GM12878 (cell line): ENCODE measurements at regions of chr22 and their contacts with region 1.

Region 1: DNA sequence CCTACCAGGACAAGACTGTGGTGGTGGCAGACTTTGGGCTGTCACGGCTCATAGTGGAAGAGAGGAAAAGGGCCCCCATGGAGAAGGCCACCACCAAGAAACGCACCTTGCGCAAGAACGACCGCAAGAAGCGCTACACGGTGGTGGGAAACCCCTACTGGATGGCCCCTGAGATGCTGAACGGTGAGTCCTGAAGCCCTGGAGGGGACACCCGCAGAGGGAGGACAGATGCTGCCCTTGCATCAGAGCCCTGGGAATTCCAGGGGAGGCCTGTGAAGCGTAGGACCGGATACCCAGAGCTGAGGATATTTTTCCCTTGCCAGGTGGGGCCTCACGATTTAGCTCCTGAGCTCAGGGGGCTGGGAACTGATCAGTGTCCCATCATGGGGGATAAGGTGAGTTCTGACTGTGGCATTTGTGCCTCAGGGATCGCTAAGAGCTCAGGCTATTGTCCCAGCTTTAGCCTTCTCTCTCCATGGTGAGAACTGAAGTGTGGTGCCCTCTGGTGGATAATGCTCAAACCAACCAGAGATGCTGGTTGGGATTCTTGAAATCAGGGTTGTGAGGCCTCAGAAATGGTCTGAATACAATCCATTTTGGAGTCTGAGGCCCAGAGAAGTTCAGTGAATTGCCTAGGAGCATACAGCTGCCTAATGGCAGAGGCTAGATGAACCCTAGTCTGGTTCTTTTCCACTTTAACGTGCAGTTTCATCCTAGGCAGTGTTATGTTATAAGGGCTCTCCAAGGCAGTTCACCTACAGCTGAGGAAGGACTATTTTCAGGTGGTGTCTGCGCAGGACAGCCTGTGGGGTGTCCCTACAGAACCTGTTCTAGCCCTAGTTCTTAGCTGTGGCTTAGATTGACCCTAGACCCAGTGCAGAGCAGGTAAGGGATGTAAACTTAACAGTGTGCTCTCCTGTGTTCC is 19.5 kb downstream of the PIK3IP1 start:
- DNase-seq: no peak
- ATAC-seq: peak; percentile 88
- H3K4me3 ChIP-seq: no peak overlapping the region
- H3K27ac ChIP-seq: no peak overlapping the region
- H3K4me1 ChIP-seq: no peaks in the 10 kb centered on the region
- H3K27me3 ChIP-seq: no peaks in the 10 kb centered on the region
- CTCF ChIP-seq: peak; percentile 72 to 79 (median 74)
- EP300 ChIP-seq: no peak
- POLR2A ChIP-seq: no peak
- RAD21 ChIP-seq: peak; percentile 76

Region 2: GRCh38 chr22:31107178-31107893 is 165.4 kb before region 1 on chr22 and contains the start of gene SELENOM:
- CTCF ChIA-PET with region 1: interaction called, 12 read pairs
- POLR2A ChIA-PET with region 1: interaction called, 7 read pairs
- RAD21 ChIA-PET with region 1: interaction called, 4 read pairs
- SMC1A ChIA-PET with region 1: interaction called, 8 read pairs
- in situ Hi-C with region 1: no loop called
- intact Hi-C with region 1: loop called (anchors 5 kb)
- DNase-seq: peak; percentile 53
- ATAC-seq: peak; percentile 94
- H3K4me3 ChIP-seq: peak within 1 kb of the TSS; percentile 54
- H3K27ac ChIP-seq: no peak within 1 kb of the TSS
- H3K4me1 ChIP-seq: no peaks in the 10 kb centered on the region; the same call in 1 of the 2 replicates
- H3K27me3 ChIP-seq: no peaks in the 10 kb centered on the region
- CTCF ChIP-seq: peak; percentile 89 to 91 (median 90)
- EP300 ChIP-seq: no peak
- POLR2A ChIP-seq: peak; percentile 72
- RAD21 ChIP-seq: peak; percentile 58
- polyA plus RNA-seq, gene SELENOM: 0.80 to 1.3 TPM

Region 3: GRCh38 chr22:31139866-31140716 is 132.7 kb before region 1 on chr22 and contains the start of gene PLA2G3:
- CTCF ChIA-PET with region 1: no interaction called
- POLR2A ChIA-PET with region 1: no interaction called
- RAD21 ChIA-PET with region 1: no interaction called
- SMC1A ChIA-PET with region 1: no interaction called
- in situ Hi-C with region 1: no loop called
- intact Hi-C with region 1: no loop called
- DNase-seq: no peak
- ATAC-seq: no peak
- H3K4me3 ChIP-seq: no peak within 1 kb of the TSS
- H3K27ac ChIP-seq: no peak within 1 kb of the TSS
- H3K4me1 ChIP-seq: no peaks in the 10 kb centered on the region
- H3K27me3 ChIP-seq: no peaks in the 10 kb centered on the region; a peak in 2 of 4 replicates
- CTCF ChIP-seq: no peak
- EP300 ChIP-seq: no peak
- POLR2A ChIP-seq: no peak
- RAD21 ChIP-seq: no peak
- polyA plus RNA-seq, gene PLA2G3: not detected

Region 4: GRCh38 chr22:31211862-31212730 is 60.7 kb before region 1 on chr22 and contains the start of gene LIMK2:
- CTCF ChIA-PET with region 1: interaction called, 115 read pairs
- POLR2A ChIA-PET with region 1: interaction called, 3 read pairs
- RAD21 ChIA-PET with region 1: interaction called, 40 read pairs
- SMC1A ChIA-PET with region 1: interaction called, 59 read pairs
- in situ Hi-C with region 1: no loop called
- intact Hi-C with region 1: loop called (anchors 1 kb)
- DNase-seq: peak; percentile 60
- ATAC-seq: peak; percentile 97
- H3K4me3 ChIP-seq: peak within 1 kb of the TSS; percentile 84
- H3K27ac ChIP-seq: peak within 1 kb of the TSS; percentile 87
- H3K4me1 ChIP-seq: peaks cover 4% of the 10 kb centered on the region
- H3K27me3 ChIP-seq: no peaks in the 10 kb centered on the region
- CTCF ChIP-seq: peak; percentile 72 to 95 (median 86)
- EP300 ChIP-seq: no peak
- POLR2A ChIP-seq: peak; percentile 91
- RAD21 ChIP-seq: peak; percentile 77
- polyA plus RNA-seq, gene LIMK2: 2.9 to 5.0 TPM

Region 5: DNA sequence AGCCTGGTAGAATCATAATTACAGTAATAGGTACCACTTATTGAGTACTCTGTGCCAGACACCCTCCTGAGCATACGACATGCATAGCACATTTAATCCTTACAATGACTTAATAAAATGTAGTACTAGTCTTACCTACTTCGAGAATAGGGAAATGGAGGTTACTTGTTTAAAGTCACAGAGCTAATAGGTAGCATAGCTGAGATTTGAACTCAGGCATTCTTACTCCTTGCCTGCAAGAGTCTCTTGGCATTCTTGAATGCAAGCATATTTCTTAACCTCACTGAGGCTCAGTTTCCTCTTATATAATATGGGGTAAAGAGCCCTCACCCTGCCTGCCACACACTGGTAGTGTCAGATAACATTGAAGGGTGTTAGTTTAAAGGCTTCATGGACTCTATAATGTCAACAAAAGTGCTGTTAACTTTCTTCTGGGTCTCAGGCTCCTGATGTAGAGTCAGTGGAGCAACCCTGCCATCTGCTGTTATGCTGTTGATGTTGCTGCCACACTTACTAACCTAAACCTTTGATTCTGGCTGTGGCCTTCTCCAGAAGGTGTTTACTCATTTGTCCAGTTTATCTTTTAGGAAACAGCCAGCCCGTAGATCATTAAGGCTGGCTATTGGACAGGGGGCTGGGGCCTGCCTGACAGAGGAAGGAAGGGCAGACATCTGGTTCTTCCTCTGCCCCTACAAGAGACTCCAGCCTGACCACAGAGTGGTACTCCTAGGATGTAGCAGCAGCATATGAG is 41.7 kb before region 1 on chr22:
- CTCF ChIA-PET with region 1: interaction called, 14 read pairs
- POLR2A ChIA-PET with region 1: no interaction called
- RAD21 ChIA-PET with region 1: interaction called, 4 read pairs
- SMC1A ChIA-PET with region 1: interaction called, 8 read pairs
- in situ Hi-C with region 1: no loop called
- intact Hi-C with region 1: no loop called
- DNase-seq: no peak
- ATAC-seq: peak; percentile 81
- H3K4me3 ChIP-seq: no peak overlapping the region
- H3K27ac ChIP-seq: peak overlapping the region; percentile 49
- H3K4me1 ChIP-seq: peaks cover 25% of the 10 kb centered on the region
- H3K27me3 ChIP-seq: no peaks in the 10 kb centered on the region
- CTCF ChIP-seq: peak; percentile 67 to 83 (median 77)
- EP300 ChIP-seq: peak in 1 of 2 experiments; percentile 5; a peak in 1 of 4 replicates
- POLR2A ChIP-seq: no peak
- RAD21 ChIP-seq: peak; percentile 89

Region 6: DNA sequence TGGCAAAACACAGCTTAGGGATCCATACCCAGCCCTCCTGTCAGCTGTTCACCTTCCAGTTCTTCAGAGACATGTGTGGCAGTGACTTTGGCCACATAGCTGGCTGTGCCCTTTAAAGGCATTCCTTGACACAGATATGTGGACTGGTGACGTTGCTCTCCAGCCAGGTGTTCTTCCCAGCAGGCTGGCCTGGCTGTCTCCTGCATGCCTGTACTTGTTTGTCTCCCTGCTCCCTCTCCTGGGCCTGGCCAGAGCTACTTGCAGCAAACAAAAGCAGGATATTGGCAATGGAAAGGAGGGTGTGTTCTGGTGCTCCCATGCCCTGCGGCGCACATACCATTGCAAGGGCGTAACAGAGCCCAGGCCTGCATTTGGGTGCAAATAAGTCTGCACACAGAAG is 18.8 kb before region 1 on chr22:
- CTCF ChIA-PET with region 1: interaction called, 34 read pairs
- POLR2A ChIA-PET with region 1: no interaction called
- RAD21 ChIA-PET with region 1: interaction called, 6 read pairs
- SMC1A ChIA-PET with region 1: interaction called, 10 read pairs
- in situ Hi-C with region 1: no loop called
- intact Hi-C with region 1: no loop called
- DNase-seq: no peak
- ATAC-seq: no peak
- H3K4me3 ChIP-seq: no peak overlapping the region
- H3K27ac ChIP-seq: peak overlapping the region; percentile 38; the same call in 1 of the 2 replicates
- H3K4me1 ChIP-seq: peaks cover 7% of the 10 kb centered on the region
- H3K27me3 ChIP-seq: no peaks in the 10 kb centered on the region
- CTCF ChIP-seq: no peak
- EP300 ChIP-seq: no peak
- POLR2A ChIP-seq: no peak
- RAD21 ChIP-seq: no peak

Region 7: DNA sequence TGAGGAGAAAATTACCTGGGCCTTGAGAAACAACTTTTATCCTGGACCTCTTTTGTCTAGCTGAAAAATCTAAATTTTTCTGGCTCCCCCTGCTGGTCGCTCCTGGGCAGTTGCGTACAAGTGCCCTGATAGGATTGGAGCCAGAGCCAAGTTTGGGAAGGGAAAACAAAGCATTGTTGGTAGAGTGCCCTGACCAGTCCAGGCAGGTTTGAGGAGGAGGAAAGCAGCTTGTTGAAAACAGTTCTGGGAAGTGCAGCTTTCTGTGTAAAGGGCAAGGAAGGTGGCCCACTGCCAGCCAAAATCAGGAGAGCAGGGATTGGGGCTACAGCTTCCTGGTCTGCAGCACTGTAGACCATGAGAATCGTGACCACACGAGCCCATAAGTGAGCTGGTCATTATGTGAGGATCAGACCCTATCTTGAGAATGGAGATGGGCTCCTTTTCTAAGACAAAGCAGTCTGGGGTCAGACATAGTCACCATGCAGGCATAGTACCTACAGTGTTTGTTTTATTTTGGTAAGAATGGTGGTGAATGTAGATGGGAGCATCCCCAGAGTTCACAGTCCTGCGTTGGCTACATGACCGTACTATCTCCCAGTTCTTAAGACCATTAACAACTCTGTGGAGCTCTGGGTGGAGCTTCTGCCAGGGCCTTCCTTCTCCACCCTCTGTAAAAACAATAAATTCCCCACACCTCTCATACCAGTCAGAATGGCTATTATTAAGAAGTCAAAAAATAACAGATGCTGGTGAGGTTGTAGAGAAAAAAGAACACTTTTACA is 40.8 kb after region 1 on chr22:
- CTCF ChIA-PET with region 1: interaction called, 14 read pairs
- POLR2A ChIA-PET with region 1: interaction called, 3 read pairs
- RAD21 ChIA-PET with region 1: interaction called, 3 read pairs
- SMC1A ChIA-PET with region 1: interaction called, 3 read pairs
- in situ Hi-C with region 1: no loop called
- intact Hi-C with region 1: no loop called
- DNase-seq: no peak
- ATAC-seq: peak; percentile 76
- H3K4me3 ChIP-seq: no peak overlapping the region
- H3K27ac ChIP-seq: no peak overlapping the region
- H3K4me1 ChIP-seq: peaks cover under 1% of the 10 kb centered on the region
- H3K27me3 ChIP-seq: no peaks in the 10 kb centered on the region
- CTCF ChIP-seq: peak; percentile 78 to 89 (median 82)
- EP300 ChIP-seq: no peak
- POLR2A ChIP-seq: no peak
- RAD21 ChIP-seq: peak; percentile 64